MCF 10A (cell line): ENCODE measurements at regions of chr20 and their contacts with region 1.

Region 1: DNA sequence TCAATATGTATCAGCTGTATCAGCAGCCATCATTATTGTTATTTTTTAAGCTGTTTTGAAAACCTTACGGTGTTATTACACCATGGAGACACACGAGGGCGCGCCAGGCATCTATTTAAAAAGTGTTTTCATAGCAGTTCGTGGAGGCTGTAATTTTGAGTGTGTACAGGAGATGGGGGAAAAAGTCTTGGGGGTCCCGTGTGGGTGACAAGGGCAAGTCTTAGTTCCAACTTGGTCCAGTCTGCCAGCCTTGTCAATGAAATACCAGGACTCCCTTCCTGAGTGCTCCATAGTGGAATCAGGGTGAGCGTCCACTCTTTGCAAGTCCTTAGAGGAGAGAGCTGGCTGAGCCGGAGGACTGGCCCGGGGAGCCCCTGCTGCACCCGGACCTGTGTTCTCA is 43.3 kb downstream of the SLC2A10 start:
- DNase-seq: peak; percentile 61
- H3K4me3 Mint-ChIP-seq: no peak overlapping the region
- H3K27ac Mint-ChIP-seq: no peak overlapping the region
- H3K4me1 Mint-ChIP-seq: peaks cover 5% of the 10 kb centered on the region
- H3K27me3 Mint-ChIP-seq: peaks cover 15% of the 10 kb centered on the region
- CTCF ChIP-seq: peak; percentile 59

Region 2: DNA sequence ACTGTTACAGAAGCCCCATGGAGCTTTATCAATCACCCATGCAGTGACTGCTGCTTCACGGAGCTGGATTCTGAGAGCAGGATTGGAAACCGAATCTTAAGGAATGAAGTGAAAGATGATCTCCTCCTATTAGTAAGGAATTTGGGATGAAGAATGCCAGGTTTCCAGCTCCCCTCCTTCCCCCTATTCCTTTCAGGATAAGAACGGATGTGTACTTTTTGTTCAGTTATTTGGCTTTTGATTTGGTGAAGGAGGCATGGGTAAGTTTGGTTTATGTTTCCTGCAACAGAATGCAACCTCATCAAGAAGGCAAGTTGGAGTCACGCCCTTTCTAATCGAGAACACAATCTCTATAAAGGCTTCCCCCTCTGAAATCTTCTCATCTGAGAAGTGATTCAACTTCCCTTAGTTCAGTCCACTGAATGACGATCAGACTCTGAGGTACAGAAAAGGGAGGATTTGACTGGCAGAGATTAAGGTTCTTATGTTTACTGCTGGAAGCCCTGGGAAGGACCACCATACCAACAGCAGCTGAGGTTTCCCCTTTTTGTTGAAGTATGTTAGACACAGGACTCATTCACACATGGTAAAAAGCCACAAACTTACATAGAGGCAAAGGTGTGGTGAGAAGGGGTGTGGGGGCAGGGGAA is 351.8 kb before region 1 on chr20:
- CTCF ChIA-PET with region 1: no interaction called
- POLR2A ChIA-PET with region 1: no interaction called
- intact Hi-C with region 1: no loop called
- DNase-seq: no peak
- H3K4me3 Mint-ChIP-seq: no peak overlapping the region
- H3K27ac Mint-ChIP-seq: peak overlapping the region; percentile 71
- H3K4me1 Mint-ChIP-seq: peaks cover 29% of the 10 kb centered on the region
- H3K27me3 Mint-ChIP-seq: no peaks in the 10 kb centered on the region
- CTCF ChIP-seq: no peak

Region 3: GRCh38 chr20:46699651-46700359 is 52.9 kb before region 1 on chr20:
- CTCF ChIA-PET with region 1: interaction called, 13 read pairs
- POLR2A ChIA-PET with region 1: no interaction called
- intact Hi-C with region 1: no loop called
- DNase-seq: peak; percentile 54
- H3K4me3 Mint-ChIP-seq: no peak overlapping the region
- H3K27ac Mint-ChIP-seq: no peak overlapping the region
- H3K4me1 Mint-ChIP-seq: peaks cover 8% of the 10 kb centered on the region
- H3K27me3 Mint-ChIP-seq: no peaks in the 10 kb centered on the region
- CTCF ChIP-seq: peak; percentile 72

Region 4: DNA sequence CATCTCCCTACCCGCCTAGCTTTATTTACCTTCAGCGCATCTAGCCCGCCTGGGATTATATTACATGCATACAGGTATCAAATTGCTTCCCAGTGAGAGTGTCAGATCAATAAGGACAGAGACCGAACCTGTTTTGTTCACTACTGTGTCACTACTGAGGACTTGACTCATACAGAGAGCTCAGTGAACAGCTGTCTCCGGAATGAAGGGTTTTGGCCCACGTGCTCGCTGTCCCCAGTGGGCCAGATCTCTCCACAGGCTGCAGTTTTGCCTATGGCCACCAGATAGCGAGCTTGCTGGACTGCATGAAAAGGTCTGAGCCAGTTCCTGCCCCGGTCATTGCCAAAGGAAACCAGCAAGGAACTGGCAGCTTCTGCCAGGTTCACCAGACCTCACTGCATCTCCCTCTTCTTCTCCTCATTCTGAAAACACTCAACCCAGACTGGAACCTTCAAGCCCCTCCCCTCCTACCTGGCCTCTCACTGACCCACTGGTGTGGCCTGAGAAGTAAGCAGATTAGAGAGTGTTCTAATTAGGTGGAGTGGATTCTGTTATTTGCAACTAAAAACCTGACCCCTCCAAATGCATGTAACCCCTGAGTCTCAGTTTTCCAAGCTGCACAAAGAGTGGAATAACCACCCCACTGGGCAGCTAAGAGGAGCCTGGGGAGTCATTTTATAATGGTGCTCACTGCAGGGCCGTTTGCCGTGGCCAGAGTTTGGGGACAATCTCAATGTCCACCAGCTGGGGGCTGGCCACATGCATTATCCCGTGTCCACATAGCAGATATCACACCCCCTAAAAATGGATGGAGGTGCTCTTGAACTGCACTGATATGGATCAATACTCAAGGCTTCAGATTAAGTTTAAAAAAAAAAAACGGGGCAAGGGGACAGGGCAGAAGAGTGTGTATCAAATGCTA is 453.1 kb after region 1 on chr20:
- CTCF ChIA-PET with region 1: interaction called, 46 read pairs
- POLR2A ChIA-PET with region 1: interaction called, 5 read pairs
- intact Hi-C with region 1: no loop called
- DNase-seq: peak; percentile 69
- H3K4me3 Mint-ChIP-seq: no peak overlapping the region
- H3K27ac Mint-ChIP-seq: no peak overlapping the region
- H3K4me1 Mint-ChIP-seq: peaks cover 6% of the 10 kb centered on the region
- H3K27me3 Mint-ChIP-seq: no peaks in the 10 kb centered on the region
- CTCF ChIP-seq: peak; percentile 67